ENCODE measurements at regions of chr9 and their contacts with region 1.

Region 1: DNA sequence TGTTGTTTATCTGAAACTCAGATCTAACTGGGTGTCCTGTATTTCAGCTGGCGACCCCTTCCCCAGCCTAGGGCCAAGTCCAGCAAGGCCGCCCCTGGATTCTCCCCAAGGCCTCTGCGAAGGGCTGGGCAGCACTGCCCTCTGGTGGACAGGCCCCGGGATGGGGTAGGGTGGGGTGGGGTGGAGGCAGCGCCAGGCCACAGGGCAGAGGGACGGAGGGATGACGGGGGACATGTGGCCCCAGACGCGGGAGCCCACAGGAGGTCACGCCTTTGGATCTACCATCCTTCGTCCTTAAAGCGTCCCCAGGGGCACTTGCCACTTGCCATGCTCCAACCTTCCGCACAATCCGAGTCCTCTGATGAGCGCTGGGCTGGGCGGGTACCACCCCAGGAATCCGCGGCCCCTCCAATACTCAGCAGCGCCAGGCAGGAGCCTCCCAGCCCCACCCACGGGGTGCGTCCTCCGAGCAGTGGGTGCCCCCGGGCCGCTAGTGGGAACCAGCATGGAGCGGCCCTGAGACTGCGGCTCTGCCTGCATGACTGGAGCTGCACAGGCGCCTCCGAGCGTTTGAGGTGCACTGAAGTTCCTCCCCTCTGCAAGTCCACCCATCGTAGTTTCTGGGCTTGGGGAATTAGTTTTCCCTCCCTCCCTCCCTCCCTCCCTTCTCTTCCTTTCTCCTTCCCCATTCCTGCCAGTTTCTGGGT is 7.1 kb upstream of the AGPAT2 start:
- DNase-seq: peak; percentile 46 to 66
- ATAC-seq: peak; percentile 45 to 51
- H3K4me3 ChIP-seq: no peak overlapping the region
- H3K27ac ChIP-seq: peak overlapping the region in 3 of 4 donors; percentile 20 to 42 (median 37)
- H3K4me1 ChIP-seq: peaks cover 21% of the 10 kb centered on the region in 2 donors
- H3K27me3 ChIP-seq: peaks cover 0 to 12% (median 5%) of the 10 kb centered on the region in 3 donors
- CTCF ChIP-seq: peak; percentile 78 to 93 (median 89)
- POLR2A ChIP-seq: no peak

Region 2: DNA sequence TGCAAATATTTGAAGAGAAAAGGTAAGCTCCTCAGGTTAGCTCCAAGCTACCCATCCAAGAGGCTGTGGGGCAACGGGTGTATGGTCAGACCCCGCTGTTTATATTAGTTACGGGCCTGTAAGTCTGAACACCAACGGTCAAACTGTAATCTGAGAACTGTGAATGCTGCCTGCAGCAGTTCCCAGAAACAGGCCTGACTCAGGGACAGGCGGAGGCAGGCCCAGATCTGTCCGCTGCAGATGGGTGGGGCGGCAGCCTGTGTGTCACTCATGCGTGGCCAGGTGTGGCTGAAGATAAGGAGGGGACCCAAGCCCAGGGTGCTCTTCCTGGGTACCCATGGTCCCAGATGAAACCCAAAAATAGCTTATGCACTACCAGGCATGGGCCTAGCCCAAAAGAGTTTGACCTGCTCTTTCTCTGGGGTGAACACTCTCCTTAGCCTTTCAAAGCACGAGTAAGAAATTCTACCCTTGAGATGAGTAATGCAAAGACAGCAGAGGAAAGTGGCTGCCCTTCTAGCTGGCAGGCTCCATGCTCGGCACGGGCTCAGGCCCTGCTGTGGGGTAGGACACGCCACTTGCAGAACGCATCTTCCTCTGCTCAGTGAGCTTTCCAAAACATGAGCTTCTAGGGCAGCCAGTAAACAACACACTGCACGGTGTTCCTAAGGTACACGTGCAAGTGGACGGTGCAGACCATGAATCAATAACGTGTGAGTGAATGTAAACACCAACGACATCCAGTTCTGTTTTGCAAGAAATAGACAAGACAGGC is 742.3 kb before region 1 on chr9:
- in situ Hi-C with region 1: no loop called
- intact Hi-C with region 1: loop called (anchors 2 kb)
- DNase-seq: peak; percentile 92 to 96
- ATAC-seq: peak; percentile 64 to 69
- H3K4me3 ChIP-seq: peak overlapping the region in 1 of 4 donors; percentile 18
- H3K27ac ChIP-seq: peak overlapping the region; percentile 97 to 100 (median 100)
- H3K4me1 ChIP-seq: peaks cover 85 to 87% of the 10 kb centered on the region in 2 donors
- H3K27me3 ChIP-seq: no peaks in the 10 kb centered on the region
- CTCF ChIP-seq: peak in 1 of 5 experiments; percentile 9
- POLR2A ChIP-seq: peak; percentile 44 to 66

Region 3: DNA sequence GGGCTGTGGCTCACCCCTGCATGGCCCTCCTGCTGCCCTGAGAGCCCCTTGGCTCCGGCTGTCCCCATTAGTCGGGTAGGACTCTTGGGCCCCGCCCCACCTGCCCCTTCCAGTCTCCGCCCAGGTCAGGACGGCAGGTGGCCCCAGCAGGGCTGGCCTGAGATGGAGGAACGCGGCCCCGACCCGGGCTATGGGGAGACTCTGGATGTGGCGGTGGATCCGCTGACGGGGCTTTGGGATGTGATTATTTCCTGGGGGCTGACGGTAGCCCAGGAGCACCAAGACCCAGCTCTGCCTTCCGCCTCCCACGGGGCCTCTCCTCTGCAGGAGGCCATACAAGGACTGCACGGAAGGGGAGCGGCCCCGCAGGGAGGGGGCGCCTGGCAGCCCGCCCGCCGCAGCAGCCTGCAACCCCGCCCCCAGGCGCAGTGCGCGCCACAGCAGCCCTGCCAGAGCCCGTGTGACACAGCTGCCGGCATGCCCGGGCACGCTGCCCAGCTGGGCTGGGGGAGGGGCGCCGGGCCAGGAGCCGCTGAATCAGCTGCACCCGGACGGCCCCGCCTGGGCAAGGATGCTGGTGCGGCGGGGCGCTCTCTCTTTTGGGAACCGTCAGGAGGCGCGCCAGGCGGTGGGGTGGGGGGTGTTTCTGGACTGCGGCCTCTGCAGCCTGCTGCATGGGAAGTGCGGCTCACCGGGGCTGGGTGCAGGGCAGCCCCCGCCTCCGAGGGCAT is 584.9 kb before region 1 on chr9:
- in situ Hi-C with region 1: no loop called
- intact Hi-C with region 1: no loop called
- DNase-seq: peak; percentile 83 to 94
- ATAC-seq: peak; percentile 74 to 78
- H3K4me3 ChIP-seq: peak overlapping the region; percentile 24 to 55 (median 44)
- H3K27ac ChIP-seq: peak overlapping the region; percentile 72 to 84 (median 74)
- H3K4me1 ChIP-seq: peaks cover 40 to 49% of the 10 kb centered on the region in 2 donors
- H3K27me3 ChIP-seq: no peaks in the 10 kb centered on the region
- CTCF ChIP-seq: peak in 2 of 5 experiments; percentile 5 to 22
- POLR2A ChIP-seq: peak in 1 of 2 donors; percentile 19

Region 4: GRCh38 chr9:136488247-136489214 is 205.9 kb before region 1 on chr9:
- in situ Hi-C with region 1: no loop called
- intact Hi-C with region 1: loop called (anchors 1 kb)
- DNase-seq: peak; percentile 33 to 67
- ATAC-seq: peak; percentile 57 to 58
- H3K4me3 ChIP-seq: no peak overlapping the region
- H3K27ac ChIP-seq: no peak overlapping the region
- H3K4me1 ChIP-seq: peaks cover 11 to 12% of the 10 kb centered on the region in 2 donors
- H3K27me3 ChIP-seq: no peaks in the 10 kb centered on the region
- CTCF ChIP-seq: peak; percentile 97 to 98 (median 98)
- POLR2A ChIP-seq: no peak

Region 5: DNA sequence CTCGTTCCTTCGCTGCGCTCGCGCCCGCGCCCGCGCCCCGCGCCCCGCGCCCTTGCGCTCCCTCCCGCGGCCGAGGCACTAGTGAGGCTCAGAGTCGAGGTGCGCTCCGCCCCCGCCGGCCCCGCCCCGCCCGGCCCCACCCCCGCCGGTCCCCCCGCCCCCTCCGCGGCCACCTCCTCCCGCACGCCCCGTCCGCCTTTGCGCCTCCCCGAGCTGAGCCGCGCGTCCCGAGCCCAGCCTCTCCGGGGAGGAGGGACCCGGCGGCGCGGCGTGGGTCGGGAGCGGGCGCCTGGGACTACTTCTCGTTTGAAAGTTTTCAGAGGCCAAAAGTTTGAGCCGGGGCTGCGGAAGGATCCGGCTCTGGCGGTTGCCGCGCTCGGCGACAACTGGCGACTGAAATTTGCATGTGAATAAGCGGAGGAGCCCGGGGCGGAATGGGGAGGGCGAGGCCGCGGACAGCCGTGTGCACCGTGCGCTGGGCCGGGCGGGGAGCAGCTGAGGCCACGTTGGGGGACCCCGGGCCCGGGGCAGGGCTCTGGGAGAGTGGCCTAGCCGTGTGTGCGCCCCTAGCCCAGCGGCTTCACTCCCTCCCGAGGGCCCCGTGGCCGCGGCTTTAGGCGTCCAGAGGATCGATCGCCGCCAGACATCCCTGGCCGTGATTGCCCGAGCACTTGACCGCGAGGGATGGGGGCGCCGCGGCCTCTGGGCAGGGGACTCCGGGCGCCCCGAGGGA is 148.3 kb before region 1 on chr9 and contains the start of gene NOTCH1:
- in situ Hi-C with region 1: no loop called
- intact Hi-C with region 1: loop called (anchors 2 kb)
- DNase-seq: peak; percentile 78 to 83
- ATAC-seq: peak; percentile 73 to 77
- H3K4me3 ChIP-seq: peak within 1 kb of the TSS; percentile 67 to 88 (median 76)
- H3K27ac ChIP-seq: peak within 1 kb of the TSS; percentile 91 to 96 (median 94)
- H3K4me1 ChIP-seq: peaks cover 17 to 20% of the 10 kb centered on the region in 2 donors
- H3K27me3 ChIP-seq: no peaks in the 10 kb centered on the region
- CTCF ChIP-seq: peak in 1 of 5 experiments; percentile 10
- POLR2A ChIP-seq: peak; percentile 81 to 86
- total RNA-seq, gene NOTCH1: 6.3 to 15.4 (median 8.2) TPM

Region 6: DNA sequence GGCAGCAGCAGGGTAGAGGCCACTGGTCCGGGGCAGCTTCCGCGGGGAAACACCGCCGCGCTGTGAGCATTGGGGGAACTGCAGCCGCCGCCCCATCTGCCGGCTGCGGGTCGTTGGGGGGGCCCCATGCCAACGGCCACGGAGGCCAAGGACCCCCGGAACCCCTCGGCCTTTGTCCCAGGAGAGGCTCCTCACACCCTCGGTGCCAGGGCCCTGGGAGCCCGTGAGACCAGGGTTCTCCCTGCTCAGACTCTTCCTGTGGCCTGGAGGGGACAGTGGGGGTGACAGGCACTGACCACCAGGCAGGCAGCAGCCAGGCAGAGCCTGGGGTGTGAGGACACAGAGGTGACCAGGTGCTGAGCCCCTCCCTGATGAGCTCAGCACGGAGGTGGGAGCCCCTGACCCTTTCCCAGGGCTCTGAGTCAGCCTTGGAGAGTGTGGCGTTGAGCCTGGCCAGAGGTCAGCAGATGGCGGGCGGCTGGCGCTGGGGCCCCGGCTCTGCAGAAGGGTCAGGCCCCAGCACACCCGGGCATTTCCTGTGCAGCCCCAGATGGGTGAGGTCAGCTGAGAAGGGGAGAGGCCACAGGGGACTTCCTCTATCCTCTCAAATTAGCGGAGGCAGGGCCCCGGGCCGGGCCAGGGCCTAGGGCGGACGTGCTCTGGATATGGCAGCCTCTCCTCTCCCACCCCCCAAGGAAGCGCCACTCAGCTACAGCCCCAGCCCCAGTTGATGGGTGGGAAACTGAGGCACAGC is 49.6 kb before region 1 on chr9:
- in situ Hi-C with region 1: no loop called
- intact Hi-C with region 1: loop called (anchors 5 kb)
- DNase-seq: peak; percentile 55 to 56
- ATAC-seq: peak; percentile 50 to 59
- H3K4me3 ChIP-seq: peak overlapping the region; percentile 37 to 57 (median 48)
- H3K27ac ChIP-seq: peak overlapping the region; percentile 34 to 81 (median 78)
- H3K4me1 ChIP-seq: peaks cover 0 to 9% of the 10 kb centered on the region in 2 donors
- H3K27me3 ChIP-seq: peaks cover 0 to 4% (median 0%) of the 10 kb centered on the region in 3 donors
- CTCF ChIP-seq: peak; percentile 77 to 93 (median 85)
- POLR2A ChIP-seq: peak; percentile 19 to 36

Region 7: GRCh38 chr9:136671646-136672430 is 22.6 kb before region 1 on chr9:
- in situ Hi-C with region 1: no loop called
- intact Hi-C with region 1: loop called (anchors 1 kb)
- DNase-seq: no peak
- ATAC-seq: no peak
- H3K4me3 ChIP-seq: no peak overlapping the region
- H3K27ac ChIP-seq: peak overlapping the region in 2 of 4 donors; percentile 9 to 23
- H3K4me1 ChIP-seq: peaks cover 0 to 6% of the 10 kb centered on the region in 2 donors
- H3K27me3 ChIP-seq: peaks cover 0 to 4% (median 4%) of the 10 kb centered on the region in 3 donors
- CTCF ChIP-seq: peak; percentile 38 to 87 (median 76)
- POLR2A ChIP-seq: no peak

Measured in gastrocnemius medialis (tissue), 4 donors.